ENCODE measurements at regions of chr10 and their contacts with region 1.

Region 1: DNA sequence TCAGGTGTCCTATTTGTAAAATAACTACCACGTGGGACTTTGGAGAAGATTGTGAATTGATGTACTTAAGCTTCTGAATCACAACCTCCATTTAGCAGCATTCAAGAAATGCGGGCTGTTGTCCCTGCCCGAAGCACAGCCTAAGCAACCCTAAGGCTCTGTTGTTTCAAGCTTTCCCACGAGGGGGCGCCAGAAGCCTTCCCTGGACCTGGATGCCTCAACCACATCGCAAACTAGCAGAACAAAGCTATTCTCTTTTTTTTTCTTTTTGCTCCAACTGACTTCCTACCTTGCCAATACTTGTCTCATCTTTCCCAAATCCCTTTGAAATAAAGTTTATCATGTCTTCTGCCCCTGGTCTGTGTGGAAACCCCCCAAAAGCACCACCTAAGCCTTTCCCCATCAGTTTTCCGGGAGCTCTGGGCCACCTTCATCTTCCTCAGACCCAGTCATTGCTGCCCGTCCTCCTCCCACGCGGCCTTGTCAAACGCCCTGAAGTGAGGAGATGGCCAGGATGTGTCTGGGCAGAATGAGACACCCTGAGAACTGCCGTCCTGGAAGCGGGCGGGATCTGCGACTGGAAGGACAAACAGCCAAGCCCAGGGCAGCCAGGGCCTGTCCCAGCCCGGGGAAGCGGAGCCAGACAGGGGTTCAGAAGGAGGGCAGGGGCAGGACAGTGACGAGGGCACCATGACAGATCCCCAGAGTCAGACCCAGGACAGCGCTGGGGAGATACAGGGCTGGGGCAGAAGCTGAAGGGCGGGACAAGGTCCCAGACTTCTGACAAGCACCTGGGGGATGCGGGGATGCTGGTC is 112.7 kb downstream of the SLIT1 start:
- DNase-seq: peak; percentile 49 to 81 (median 69)
- ATAC-seq: peak; percentile 69
- H3K4me3 ChIP-seq: no peak overlapping the region
- H3K4me3 Mint-ChIP-seq: no peak overlapping the region
- H3K27ac ChIP-seq: no peak overlapping the region
- H3K27ac Mint-ChIP-seq: no peak overlapping the region
- H3K4me1 ChIP-seq: no peaks in the 10 kb centered on the region
- H3K4me1 Mint-ChIP-seq: peaks cover 0 to 12% (median 6%) of the 10 kb centered on the region in 7 donors
- H3K27me3 ChIP-seq: no peaks in the 10 kb centered on the region
- H3K27me3 Mint-ChIP-seq: peaks cover 16 to 42% (median 29%) of the 10 kb centered on the region in 5 donors

Region 2: GRCh38 chr10:97028126-97028831 is 44.8 kb before region 1 on chr10:
- CTCF ChIA-PET with region 1: no interaction called
- POLR2A ChIA-PET with region 1: no interaction called
- intact Hi-C with region 1: no loop called
- DNase-seq: no peak
- ATAC-seq: no peak
- H3K4me3 ChIP-seq: no peak overlapping the region
- H3K4me3 Mint-ChIP-seq: no peak overlapping the region
- H3K27ac ChIP-seq: no peak overlapping the region
- H3K27ac Mint-ChIP-seq: no peak overlapping the region
- H3K4me1 ChIP-seq: no peaks in the 10 kb centered on the region
- H3K4me1 Mint-ChIP-seq: peaks cover 0 to 10% (median 0%) of the 10 kb centered on the region in 7 donors
- H3K27me3 ChIP-seq: no peaks in the 10 kb centered on the region
- H3K27me3 Mint-ChIP-seq: peaks cover 0 to 8% (median 0%) of the 10 kb centered on the region in 5 donors

Region 3: DNA sequence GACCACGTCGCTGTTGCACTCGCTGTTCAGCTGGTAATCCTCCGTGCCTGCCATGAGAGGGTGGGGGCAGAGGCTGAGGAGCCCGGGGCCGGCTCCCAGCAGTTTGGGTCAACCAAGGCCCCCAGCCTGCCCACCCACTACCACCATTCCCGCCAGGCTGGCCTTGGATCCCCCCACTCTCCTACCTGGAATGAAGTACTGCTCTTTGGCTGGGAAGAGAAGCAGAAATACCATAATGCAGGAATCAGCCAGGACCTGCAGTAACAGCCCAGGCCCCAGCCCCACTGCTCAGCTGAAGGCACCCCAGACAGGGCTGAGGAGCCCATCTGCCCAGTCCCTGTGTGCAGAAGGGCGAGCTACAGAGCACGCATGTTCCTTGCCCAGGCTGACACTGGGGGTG is 25.3 kb before region 1 on chr10:
- CTCF ChIA-PET with region 1: no interaction called
- POLR2A ChIA-PET with region 1: no interaction called
- intact Hi-C with region 1: no loop called
- DNase-seq: no peak
- ATAC-seq: no peak
- H3K4me3 ChIP-seq: no peak overlapping the region
- H3K4me3 Mint-ChIP-seq: no peak overlapping the region
- H3K27ac ChIP-seq: no peak overlapping the region
- H3K27ac Mint-ChIP-seq: no peak overlapping the region
- H3K4me1 ChIP-seq: no peaks in the 10 kb centered on the region
- H3K4me1 Mint-ChIP-seq: peaks cover 0 to 3% (median 0%) of the 10 kb centered on the region in 7 donors
- H3K27me3 ChIP-seq: no peaks in the 10 kb centered on the region
- H3K27me3 Mint-ChIP-seq: peaks cover 0 to 11% (median 0%) of the 10 kb centered on the region in 5 donors

Region 4: GRCh38 chr10:97117372-97117771 is 44.3 kb after region 1 on chr10:
- CTCF ChIA-PET with region 1: interaction called, 4 read pairs
- POLR2A ChIA-PET with region 1: no interaction called
- intact Hi-C with region 1: loop called in 1 of 2 experiments (anchors 2 kb)
- DNase-seq: no peak
- ATAC-seq: no peak
- H3K4me3 ChIP-seq: no peak overlapping the region
- H3K4me3 Mint-ChIP-seq: no peak overlapping the region
- H3K27ac ChIP-seq: no peak overlapping the region
- H3K27ac Mint-ChIP-seq: no peak overlapping the region
- H3K4me1 ChIP-seq: no peaks in the 10 kb centered on the region
- H3K4me1 Mint-ChIP-seq: no peaks in the 10 kb centered on the region
- H3K27me3 ChIP-seq: no peaks in the 10 kb centered on the region
- H3K27me3 Mint-ChIP-seq: peaks cover 9 to 16% (median 12%) of the 10 kb centered on the region in 5 donors

Region 5: GRCh38 chr10:97196223-97197029 is 123.4 kb after region 1 on chr10:
- CTCF ChIA-PET with region 1: interaction called, 9 read pairs
- POLR2A ChIA-PET with region 1: no interaction called
- intact Hi-C with region 1: loop called in 1 of 2 experiments (anchors 1 kb)
- DNase-seq: peak; percentile 32 to 73 (median 66)
- ATAC-seq: peak; percentile 91
- H3K4me3 ChIP-seq: peak overlapping the region; percentile 83
- H3K4me3 Mint-ChIP-seq: peak overlapping the region; percentile 83 to 94 (median 87)
- H3K27ac ChIP-seq: peak overlapping the region; percentile 17
- H3K27ac Mint-ChIP-seq: peak overlapping the region in 1 of 9 donors; percentile 30
- H3K4me1 ChIP-seq: peaks cover 6% of the 10 kb centered on the region in 2 donors
- H3K4me1 Mint-ChIP-seq: peaks cover 0 to 14% (median 6%) of the 10 kb centered on the region in 7 donors
- H3K27me3 ChIP-seq: peaks cover 2 to 4% of the 10 kb centered on the region in 2 donors
- H3K27me3 Mint-ChIP-seq: peaks cover 19 to 76% (median 27%) of the 10 kb centered on the region in 5 donors

Region 6: DNA sequence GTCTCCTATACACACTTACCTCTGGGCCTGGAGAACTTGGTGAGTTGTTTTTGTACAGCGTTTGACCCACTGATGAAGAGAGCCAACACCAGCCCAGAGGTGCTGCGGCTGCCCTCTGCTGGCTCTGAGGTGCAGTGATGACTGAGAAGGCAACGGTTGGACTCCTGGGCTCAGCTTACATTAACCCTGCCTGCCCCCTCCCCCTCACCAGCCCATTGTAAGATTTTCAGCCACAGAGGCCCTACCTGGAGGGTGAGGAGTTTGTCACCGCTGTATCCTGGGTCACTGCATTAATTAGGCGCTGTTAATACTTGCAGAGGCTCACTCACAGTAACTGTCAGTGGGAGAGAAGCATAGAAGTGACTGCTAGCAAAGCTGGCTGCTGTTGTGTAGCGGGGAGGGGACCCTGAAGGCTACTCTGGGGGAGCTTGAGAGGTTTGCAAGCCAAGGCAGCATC is 480.5 kb after region 1 on chr10:
- CTCF ChIA-PET with region 1: no interaction called
- POLR2A ChIA-PET with region 1: no interaction called
- intact Hi-C with region 1: loop called in 1 of 2 experiments (anchors 2 kb)
- DNase-seq: peak in 7 of 9 donors; percentile 27 to 60 (median 52)
- ATAC-seq: peak; percentile 64
- H3K4me3 ChIP-seq: no peak overlapping the region
- H3K4me3 Mint-ChIP-seq: no peak overlapping the region
- H3K27ac ChIP-seq: no peak overlapping the region
- H3K27ac Mint-ChIP-seq: no peak overlapping the region
- H3K4me1 ChIP-seq: no peaks in the 10 kb centered on the region
- H3K4me1 Mint-ChIP-seq: peaks cover 0 to 2% (median 0%) of the 10 kb centered on the region in 7 donors
- H3K27me3 ChIP-seq: no peaks in the 10 kb centered on the region
- H3K27me3 Mint-ChIP-seq: no peaks in the 10 kb centered on the region